GM12878 (cell line): ENCODE measurements at regions of chr10 and their contacts with region 1.

Region 1: DNA sequence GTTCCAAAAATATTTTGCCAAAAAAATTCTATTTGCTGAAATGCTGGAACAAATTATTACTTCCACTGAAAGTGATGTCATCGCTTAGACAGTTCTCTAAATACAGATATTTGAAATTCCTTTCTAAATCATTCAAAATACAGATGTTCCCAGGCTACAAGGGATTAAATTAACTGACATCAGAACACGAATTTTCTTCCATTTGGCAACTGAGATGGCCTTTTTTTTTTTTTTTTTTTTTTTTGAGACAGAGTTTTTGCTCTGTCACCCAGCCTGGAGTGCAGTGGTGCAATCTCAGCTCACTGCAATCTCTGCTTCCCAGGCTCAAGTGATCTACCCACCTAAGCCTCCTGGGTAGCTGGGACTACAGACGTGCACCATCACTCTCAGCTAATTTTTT is 57.0 kb downstream of the P4HA1 start:
- DNase-seq: no peak
- ATAC-seq: no peak
- H3K4me3 ChIP-seq: no peak overlapping the region
- H3K27ac ChIP-seq: no peak overlapping the region
- H3K4me1 ChIP-seq: no peaks in the 10 kb centered on the region
- H3K27me3 ChIP-seq: no peaks in the 10 kb centered on the region
- CTCF ChIP-seq: no peak
- EP300 ChIP-seq: no peak
- POLR2A ChIP-seq: no peak
- RAD21 ChIP-seq: no peak

Region 2: DNA sequence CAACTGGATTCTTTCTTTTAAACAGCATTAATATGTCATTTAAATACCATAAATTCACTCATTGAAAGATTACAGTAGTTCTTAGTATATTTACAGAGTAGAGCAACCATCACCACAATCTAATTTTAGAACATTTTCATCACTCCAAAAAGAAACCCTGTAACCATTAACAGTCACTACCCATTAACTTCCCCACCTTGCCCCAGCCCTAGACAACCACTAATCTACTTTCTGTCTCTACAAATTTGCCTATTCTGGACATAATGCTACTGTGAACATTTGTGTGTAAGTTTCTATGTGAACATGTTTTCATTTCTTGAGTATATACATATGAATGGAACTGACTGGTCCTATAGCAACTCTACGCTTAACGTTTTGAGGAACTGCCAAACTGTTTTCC is 14.7 kb after region 1 on chr10:
- CTCF ChIA-PET with region 1: interaction called, 3 read pairs
- POLR2A ChIA-PET with region 1: no interaction called
- RAD21 ChIA-PET with region 1: no interaction called
- SMC1A ChIA-PET with region 1: interaction called, 11 read pairs
- in situ Hi-C with region 1: no loop called
- intact Hi-C with region 1: no loop called
- DNase-seq: peak; percentile 34
- ATAC-seq: peak; percentile 94
- H3K4me3 ChIP-seq: no peak overlapping the region
- H3K27ac ChIP-seq: peak overlapping the region; percentile 22; the same call in 1 of the 2 replicates
- H3K4me1 ChIP-seq: peaks cover 18% of the 10 kb centered on the region
- H3K27me3 ChIP-seq: no peaks in the 10 kb centered on the region
- CTCF ChIP-seq: no peak
- EP300 ChIP-seq: no peak
- POLR2A ChIP-seq: no peak
- RAD21 ChIP-seq: no peak

Region 3: GRCh38 chr10:73252445-73253224 is 213.0 kb after region 1 on chr10 and contains the start of gene MRPS16:
- CTCF ChIA-PET with region 1: no interaction called
- POLR2A ChIA-PET with region 1: no interaction called
- RAD21 ChIA-PET with region 1: no interaction called
- SMC1A ChIA-PET with region 1: no interaction called
- in situ Hi-C with region 1: no loop called
- intact Hi-C with region 1: no loop called
- DNase-seq: peak; percentile 88
- ATAC-seq: peak; percentile 87
- H3K4me3 ChIP-seq: peak within 1 kb of the TSS; percentile 93
- H3K27ac ChIP-seq: peak within 1 kb of the TSS; percentile 97
- H3K4me1 ChIP-seq: peaks cover 11% of the 10 kb centered on the region
- H3K27me3 ChIP-seq: no peaks in the 10 kb centered on the region
- CTCF ChIP-seq: no peak
- EP300 ChIP-seq: no peak
- POLR2A ChIP-seq: peak; percentile 99
- RAD21 ChIP-seq: no peak
- polyA plus RNA-seq, gene MRPS16: 43.4 to 98.5 TPM